ENCODE measurements at regions of chr1 and their contacts with region 1.

Region 1: GRCh38 chr1:81113688-81114087 is 687.0 kb upstream of the ADGRL2 start:
- DNase-seq: peak; percentile 60
- ATAC-seq: peak; percentile 70
- H3K4me3 ChIP-seq: no peak overlapping the region
- H3K27ac ChIP-seq: no peak overlapping the region
- H3K4me1 ChIP-seq: no peaks in the 10 kb centered on the region
- H3K27me3 ChIP-seq: no peaks in the 10 kb centered on the region
- CTCF ChIP-seq: no peak

Region 2: GRCh38 chr1:81004011-81004410 is 109.7 kb before region 1 on chr1:
- CTCF ChIA-PET with region 1: no interaction called
- POLR2A ChIA-PET with region 1: no interaction called
- intact Hi-C with region 1: no loop called
- DNase-seq: no peak
- ATAC-seq: no peak
- H3K4me3 ChIP-seq: no peak overlapping the region
- H3K27ac ChIP-seq: no peak overlapping the region
- H3K4me1 ChIP-seq: no peaks in the 10 kb centered on the region
- H3K27me3 ChIP-seq: no peaks in the 10 kb centered on the region
- CTCF ChIP-seq: no peak

Region 3: DNA sequence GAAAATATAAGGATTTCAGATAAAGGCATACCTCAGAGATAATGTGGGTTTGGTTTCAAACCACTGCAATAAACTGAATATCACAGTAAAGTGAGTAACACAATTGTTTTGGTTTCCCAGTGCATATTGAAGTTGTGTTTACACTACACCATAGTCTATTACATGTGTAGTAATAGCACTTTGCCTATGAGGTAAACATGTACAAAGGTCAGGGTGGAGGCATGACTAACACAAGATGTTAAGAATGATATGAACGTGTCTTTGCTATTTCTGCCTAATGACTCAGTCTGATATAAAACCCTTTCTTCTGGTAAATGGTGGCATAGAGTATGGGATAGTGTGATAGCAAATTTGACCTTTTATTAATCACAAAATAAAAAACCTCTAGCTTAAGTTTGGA is 65.6 kb after region 1 on chr1:
- CTCF ChIA-PET with region 1: no interaction called
- POLR2A ChIA-PET with region 1: no interaction called
- intact Hi-C with region 1: loop called (anchors 1 kb)
- DNase-seq: peak; percentile 96
- ATAC-seq: peak; percentile 70
- H3K4me3 ChIP-seq: no peak overlapping the region
- H3K27ac ChIP-seq: peak overlapping the region; percentile 44
- H3K4me1 ChIP-seq: peaks cover 19% of the 10 kb centered on the region
- H3K27me3 ChIP-seq: no peaks in the 10 kb centered on the region
- CTCF ChIP-seq: no peak